ENCODE measurements at regions of chr15 and their contacts with region 1.

Region 1: GRCh38 chr15:78739996-78740903 is 71.0 kb downstream of the ADAMTS7 start:
- DNase-seq: peak; percentile 77
- H3K4me3 Mint-ChIP-seq: no peak overlapping the region
- H3K27ac Mint-ChIP-seq: no peak overlapping the region
- H3K4me1 Mint-ChIP-seq: peaks cover 16% of the 10 kb centered on the region
- H3K27me3 Mint-ChIP-seq: peaks cover 4% of the 10 kb centered on the region

Region 2: GRCh38 chr15:78726870-78727551 is 13.2 kb before region 1 on chr15:
- CTCF ChIA-PET with region 1: interaction called, 11 read pairs
- POLR2A ChIA-PET with region 1: no interaction called
- DNase-seq: peak; percentile 15
- H3K4me3 Mint-ChIP-seq: no peak overlapping the region
- H3K27ac Mint-ChIP-seq: no peak overlapping the region
- H3K4me1 Mint-ChIP-seq: peaks cover 2% of the 10 kb centered on the region
- H3K27me3 Mint-ChIP-seq: peaks cover 11% of the 10 kb centered on the region

Region 3: DNA sequence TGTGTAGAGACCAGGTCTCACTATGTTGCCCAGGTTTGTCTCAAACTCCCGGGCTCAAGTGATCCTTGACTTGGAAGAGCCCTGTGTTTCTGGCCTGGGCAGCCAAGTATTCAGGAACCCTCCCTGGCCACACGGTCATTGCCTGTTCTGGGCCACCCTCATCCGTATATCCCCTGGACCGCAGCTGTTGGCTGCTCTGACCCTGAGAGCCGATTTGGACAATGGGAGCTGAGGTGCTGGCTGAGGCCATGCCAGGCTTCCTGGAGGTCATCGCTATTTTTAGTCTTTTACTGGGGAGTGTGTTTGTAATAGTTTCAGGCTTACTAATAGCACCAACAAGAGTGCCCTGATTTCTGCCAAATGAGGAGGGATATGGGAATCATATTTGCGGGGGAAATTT is 10.3 kb after region 1 on chr15:
- CTCF ChIA-PET with region 1: interaction called, 19 read pairs
- POLR2A ChIA-PET with region 1: no interaction called
- DNase-seq: no peak
- H3K4me3 Mint-ChIP-seq: no peak overlapping the region
- H3K27ac Mint-ChIP-seq: no peak overlapping the region
- H3K4me1 Mint-ChIP-seq: peaks cover 5% of the 10 kb centered on the region
- H3K27me3 Mint-ChIP-seq: no peaks in the 10 kb centered on the region

Measured in activated CD4-positive, alpha-beta memory T cell treated with anti-CD3 and anti-CD28 coated beads, Interleukin-2, amount 10 ng/mL, durations not matched to agents 7 days and 5 days (primary cell).